ENCODE measurements at regions of chr17 and their contacts with region 1.

Region 1: GRCh38 chr17:6913608-6914443 is 82.0 kb upstream of the ALOX12 start:
- DNase-seq: no peak
- H3K4me3 ChIP-seq: no peak overlapping the region
- H3K27me3 ChIP-seq: peaks cover 9% of the 10 kb centered on the region
- CTCF ChIP-seq: peak; percentile 80

Region 2: GRCh38 chr17:6574687-6575595 is 338.9 kb before region 1 on chr17:
- CTCF ChIA-PET with region 1: no interaction called
- POLR2A ChIA-PET with region 1: no interaction called
- DNase-seq: no peak
- H3K4me3 ChIP-seq: no peak overlapping the region
- H3K27me3 ChIP-seq: no peaks in the 10 kb centered on the region
- CTCF ChIP-seq: peak; percentile 22

Region 3: DNA sequence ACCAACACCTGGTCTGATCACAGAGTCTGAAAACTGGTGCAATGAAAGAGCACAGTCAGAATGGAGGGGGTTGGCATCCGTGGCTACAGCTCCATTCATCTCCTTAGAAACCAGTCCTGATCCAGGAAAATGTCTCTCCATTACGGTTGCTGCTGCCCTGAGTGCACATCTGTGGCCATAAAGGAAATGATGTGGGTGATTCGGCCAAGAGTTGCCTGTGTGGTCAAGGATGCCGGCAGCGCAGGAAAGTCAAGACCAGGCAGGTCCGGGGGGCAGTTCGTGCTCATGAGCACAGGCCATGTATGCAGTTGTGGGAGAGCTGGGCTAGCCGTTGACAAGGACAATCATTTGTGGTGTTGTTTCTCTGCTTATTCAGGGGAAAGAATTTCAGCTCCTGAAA is 152.0 kb before region 1 on chr17:
- CTCF ChIA-PET with region 1: no interaction called
- POLR2A ChIA-PET with region 1: no interaction called
- DNase-seq: no peak
- H3K4me3 ChIP-seq: no peak overlapping the region
- H3K27me3 ChIP-seq: no peaks in the 10 kb centered on the region
- CTCF ChIP-seq: no peak

Region 4: GRCh38 chr17:6894206-6894528 is 19.7 kb before region 1 on chr17:
- CTCF ChIA-PET with region 1: interaction called, 11 read pairs
- POLR2A ChIA-PET with region 1: no interaction called
- DNase-seq: no peak
- H3K4me3 ChIP-seq: no peak overlapping the region
- H3K27me3 ChIP-seq: peaks cover 23% of the 10 kb centered on the region
- CTCF ChIP-seq: peak; percentile 40; the same call in 1 of the 2 replicates

Region 5: DNA sequence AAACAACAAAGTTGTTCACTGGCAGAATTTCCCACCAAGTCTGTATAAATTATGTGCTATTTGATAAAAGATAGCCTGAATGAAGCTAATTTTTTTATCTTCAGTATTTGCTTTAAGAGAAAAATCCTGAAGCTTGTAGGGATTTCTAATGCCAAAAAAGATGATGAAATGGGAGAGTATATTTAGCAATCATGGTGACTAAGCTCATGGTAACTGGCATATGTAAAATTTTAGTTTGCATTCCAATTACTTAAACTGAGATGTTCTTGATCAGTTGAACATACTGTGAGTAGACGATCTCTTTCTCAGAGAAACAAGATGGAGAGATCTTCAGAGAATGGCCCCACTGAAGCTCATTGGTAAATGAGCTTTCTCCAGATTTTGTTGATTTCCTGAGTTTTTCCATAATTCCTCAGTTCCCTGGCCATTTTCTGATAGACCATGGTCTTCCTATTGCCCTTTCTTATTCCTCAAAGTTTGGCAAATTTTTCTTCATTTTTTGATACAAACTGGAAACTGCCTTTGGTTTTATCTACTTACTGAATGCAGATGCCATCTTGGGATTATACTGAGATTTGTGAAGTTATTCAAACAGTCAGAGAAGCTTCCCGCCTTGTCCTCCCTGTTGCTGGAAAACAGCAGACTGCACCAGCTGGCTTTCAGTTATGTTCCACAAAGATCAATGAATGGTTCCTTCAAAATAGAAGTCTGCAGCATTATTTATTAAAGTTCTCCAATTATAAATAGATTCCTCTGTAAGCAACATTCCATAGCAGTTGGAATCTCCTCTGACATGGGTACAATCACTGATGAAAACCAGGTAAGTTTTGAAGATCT is 13.7 kb after region 1 on chr17:
- CTCF ChIA-PET with region 1: interaction called, 25 read pairs
- POLR2A ChIA-PET with region 1: no interaction called
- DNase-seq: peak; percentile 51
- H3K4me3 ChIP-seq: no peak overlapping the region
- H3K27me3 ChIP-seq: no peaks in the 10 kb centered on the region
- CTCF ChIP-seq: no peak

Region 6: DNA sequence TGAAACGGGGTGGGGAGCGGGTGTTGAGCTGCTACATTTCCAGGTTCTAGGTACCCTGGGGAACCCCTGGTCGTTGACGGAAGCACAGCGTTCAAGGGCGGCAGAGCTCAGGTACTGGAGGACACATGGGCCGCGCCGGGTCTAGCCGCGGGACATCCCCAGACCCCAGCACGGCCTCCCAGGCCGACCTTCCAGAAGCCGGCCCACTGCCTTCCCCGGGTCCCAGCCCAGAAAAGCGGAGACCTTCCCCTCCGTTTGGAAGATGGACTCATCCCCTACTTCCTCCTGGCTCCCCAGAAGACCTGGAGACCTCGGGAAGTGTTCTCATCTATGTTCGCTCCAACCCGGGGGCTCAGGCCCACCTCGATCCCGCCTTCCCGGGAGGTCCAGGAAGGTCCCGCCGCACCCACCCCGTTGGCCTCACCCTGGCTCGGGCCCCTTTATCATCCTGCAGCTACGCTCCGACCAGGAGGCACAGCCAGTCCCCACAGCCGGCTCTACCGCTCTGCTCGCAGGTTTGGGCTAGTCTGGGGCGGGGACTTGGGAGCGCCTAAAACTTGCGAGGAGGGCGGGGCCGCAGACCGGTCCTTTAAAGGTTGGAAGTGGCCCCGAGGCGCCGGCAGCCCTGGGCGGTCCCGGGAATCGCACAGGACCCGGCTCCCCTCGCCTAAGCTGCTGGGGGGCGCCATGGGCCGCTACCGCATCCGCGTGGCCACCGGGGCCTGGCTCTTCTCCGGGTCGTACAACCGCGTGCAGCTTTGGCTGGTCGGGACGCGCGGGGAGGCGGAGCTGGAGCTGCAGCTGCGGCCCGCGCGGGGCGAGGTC is 81.8 kb after region 1 on chr17 and contains the start of gene ALOX12:
- CTCF ChIA-PET with region 1: interaction called, 183 read pairs
- POLR2A ChIA-PET with region 1: no interaction called
- DNase-seq: no peak
- H3K4me3 ChIP-seq: peak within 1 kb of the TSS; percentile 16
- H3K27me3 ChIP-seq: no peaks in the 10 kb centered on the region
- CTCF ChIP-seq: no peak
- polyA plus RNA-seq, gene ALOX12: not detected in 2 replicates

Region 7: DNA sequence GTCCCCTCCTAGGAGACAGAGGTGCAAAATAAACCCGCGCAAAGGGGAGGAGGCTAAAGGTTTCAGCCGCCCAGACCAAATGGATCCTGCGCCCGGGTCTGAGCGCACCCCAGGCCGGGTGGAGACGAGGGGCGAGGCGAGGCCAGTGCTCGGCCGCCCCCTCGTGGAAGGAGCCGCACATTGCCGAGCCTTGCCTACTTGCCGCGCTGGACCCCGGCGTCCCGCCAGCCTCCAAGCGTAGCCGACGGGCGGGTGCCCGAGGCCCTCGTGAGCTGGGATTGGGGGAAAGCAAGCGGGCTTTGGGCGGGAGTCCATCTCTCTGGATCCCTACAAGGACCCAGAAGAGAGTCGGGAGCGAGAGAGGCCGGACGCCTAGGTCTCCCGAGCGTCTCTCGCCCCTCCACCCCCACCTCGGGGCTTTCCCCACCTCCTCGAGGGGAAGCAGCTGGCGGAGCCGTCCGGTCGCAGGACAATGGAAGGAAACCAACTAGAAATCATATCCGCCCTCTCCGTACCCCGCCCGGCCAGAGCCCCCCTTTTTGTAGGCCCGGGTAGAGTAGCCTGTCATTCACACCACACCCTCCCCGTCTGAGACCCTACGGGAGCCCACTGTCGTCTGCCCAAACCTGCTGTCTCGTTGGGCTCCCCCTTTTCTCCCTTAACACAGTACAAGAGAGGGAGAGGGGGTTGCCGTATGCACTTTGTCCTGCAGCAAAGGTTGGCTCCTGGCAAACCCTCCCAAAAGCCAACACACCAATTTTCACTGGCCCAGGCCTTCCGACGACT is 108.4 kb after region 1 on chr17:
- CTCF ChIA-PET with region 1: interaction called, 61 read pairs
- POLR2A ChIA-PET with region 1: no interaction called
- DNase-seq: no peak
- H3K4me3 ChIP-seq: no peak overlapping the region
- H3K27me3 ChIP-seq: no peaks in the 10 kb centered on the region
- CTCF ChIP-seq: peak; percentile 97

Region 8: GRCh38 chr17:7039832-7040231 is 126.0 kb after region 1 on chr17:
- CTCF ChIA-PET with region 1: no interaction called
- POLR2A ChIA-PET with region 1: no interaction called
- DNase-seq: no peak
- H3K4me3 ChIP-seq: no peak overlapping the region
- H3K27me3 ChIP-seq: peaks cover 14% of the 10 kb centered on the region
- CTCF ChIP-seq: no peak